Naive thymus-derived CD4-positive, alpha-beta T cell (primary cell): ENCODE measurements at regions of chr15 and their contacts with region 1.

Region 1: DNA sequence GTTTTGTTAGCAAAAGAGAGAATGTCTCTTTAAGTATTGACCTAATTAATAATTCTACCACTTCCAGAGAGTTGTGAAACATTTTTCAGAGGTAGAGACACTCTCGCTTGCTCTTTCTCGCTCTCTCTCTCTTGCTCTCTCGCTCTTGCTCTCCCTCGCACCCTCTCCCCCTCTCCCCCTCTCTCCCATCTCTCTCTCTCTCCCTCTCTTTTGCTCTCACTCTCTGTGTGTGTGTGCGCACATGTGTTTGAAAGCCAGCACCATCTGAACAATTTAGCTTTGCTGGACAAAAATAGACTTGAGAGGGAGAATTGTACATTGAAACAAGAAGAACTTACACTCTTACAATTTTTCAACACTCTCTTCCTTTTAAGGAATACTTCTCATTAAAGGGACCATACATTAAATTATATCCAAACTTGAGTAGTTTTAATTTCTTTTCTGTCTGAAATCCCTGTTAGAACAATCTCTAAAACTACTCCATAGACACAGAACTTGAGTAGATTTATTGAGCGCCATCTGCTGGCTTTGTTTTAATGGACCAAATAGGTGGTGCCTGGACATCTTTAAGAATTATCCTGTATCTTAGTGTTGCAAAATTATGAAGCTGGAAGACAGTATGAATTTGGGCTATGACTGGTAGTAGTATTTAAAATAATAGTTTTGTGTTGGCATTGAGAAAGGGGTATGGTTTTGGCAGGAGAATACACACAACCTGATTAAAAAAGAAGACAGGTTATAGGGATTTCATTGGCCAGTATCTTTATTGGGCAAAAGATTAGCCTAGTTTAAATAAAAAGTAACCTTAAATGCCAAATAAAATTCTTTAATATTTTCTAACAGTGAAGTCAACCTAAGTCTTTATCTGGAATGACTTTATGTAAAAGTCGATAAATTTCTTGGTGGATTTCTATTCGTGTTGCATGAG is 124.6 kb downstream of the AKAP13 start:
- DNase-seq: peak in 7 of 9 donors; percentile 7 to 51 (median 37)
- ATAC-seq: peak; percentile 66
- H3K4me3 ChIP-seq: no peak overlapping the region
- H3K4me3 Mint-ChIP-seq: peak overlapping the region in 1 of 10 donors; percentile 20
- H3K27ac ChIP-seq: no peak overlapping the region
- H3K27ac Mint-ChIP-seq: peak overlapping the region in 3 of 9 donors; percentile 13 to 30 (median 22)
- H3K4me1 ChIP-seq: peaks cover 11 to 13% of the 10 kb centered on the region in 2 donors
- H3K4me1 Mint-ChIP-seq: peaks cover 26 to 90% (median 71%) of the 10 kb centered on the region in 7 donors
- H3K27me3 ChIP-seq: no peaks in the 10 kb centered on the region
- H3K27me3 Mint-ChIP-seq: no peaks in the 10 kb centered on the region

Region 2: DNA sequence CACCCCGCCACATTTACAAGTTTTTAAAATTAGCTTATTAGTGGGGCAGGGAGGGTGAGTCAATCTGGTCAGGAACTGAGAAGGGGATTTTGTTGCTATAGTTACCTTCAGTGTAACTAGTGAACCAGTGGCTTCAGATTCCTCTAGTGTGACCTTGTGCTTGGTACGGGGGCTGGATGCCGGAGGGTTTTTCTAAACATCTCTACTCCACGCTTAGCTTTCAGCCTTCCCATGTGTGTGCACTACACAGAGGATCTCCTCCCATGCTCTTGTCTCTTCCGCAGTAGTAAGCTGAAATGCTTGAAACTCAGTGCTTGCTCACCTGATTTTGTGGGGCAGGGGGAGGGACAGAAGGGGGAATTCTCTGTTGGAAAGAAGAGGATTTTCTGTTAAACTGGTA is 192.5 kb before region 1 on chr15:
- CTCF ChIA-PET with region 1: no interaction called
- POLR2A ChIA-PET with region 1: no interaction called
- intact Hi-C with region 1: loop called in 1 of 2 experiments (anchors 5 kb)
- DNase-seq: no peak
- ATAC-seq: peak; percentile 71
- H3K4me3 ChIP-seq: no peak overlapping the region
- H3K4me3 Mint-ChIP-seq: no peak overlapping the region
- H3K27ac ChIP-seq: no peak overlapping the region
- H3K27ac Mint-ChIP-seq: no peak overlapping the region
- H3K4me1 ChIP-seq: peaks cover 18 to 21% of the 10 kb centered on the region in 2 donors
- H3K4me1 Mint-ChIP-seq: peaks cover 25 to 55% (median 35%) of the 10 kb centered on the region in 7 donors
- H3K27me3 ChIP-seq: no peaks in the 10 kb centered on the region
- H3K27me3 Mint-ChIP-seq: peaks cover 0 to 2% (median 0%) of the 10 kb centered on the region in 5 donors

Region 3: DNA sequence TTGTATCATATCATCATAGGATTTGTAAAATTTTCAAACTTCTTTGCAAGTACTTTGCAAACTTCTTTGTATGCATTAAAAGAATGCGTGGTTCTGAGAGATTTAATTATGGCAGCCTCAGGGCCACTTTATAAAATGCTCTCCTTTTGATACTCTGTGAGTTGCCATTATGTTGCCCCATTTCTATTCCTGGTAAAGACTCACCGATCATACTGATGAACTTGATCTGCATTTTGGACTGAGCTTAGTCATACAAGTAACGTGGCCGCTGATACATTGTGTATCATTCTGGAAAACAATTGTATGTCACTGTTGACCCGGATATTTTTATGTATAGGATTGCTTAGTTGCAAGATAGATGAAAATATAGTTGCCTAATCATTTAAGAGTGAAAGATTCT is 85.9 kb before region 1 on chr15:
- CTCF ChIA-PET with region 1: no interaction called
- POLR2A ChIA-PET with region 1: no interaction called
- intact Hi-C with region 1: loop called in 1 of 2 experiments (anchors 5 kb)
- DNase-seq: no peak
- ATAC-seq: no peak
- H3K4me3 ChIP-seq: no peak overlapping the region
- H3K4me3 Mint-ChIP-seq: peak overlapping the region in 3 of 10 donors; percentile 11 to 41 (median 14)
- H3K27ac ChIP-seq: no peak overlapping the region
- H3K27ac Mint-ChIP-seq: peak overlapping the region in 1 of 9 donors; percentile 4
- H3K4me1 ChIP-seq: peaks cover 10 to 18% of the 10 kb centered on the region in 2 donors
- H3K4me1 Mint-ChIP-seq: peaks cover 43 to 84% (median 77%) of the 10 kb centered on the region in 7 donors
- H3K27me3 ChIP-seq: no peaks in the 10 kb centered on the region
- H3K27me3 Mint-ChIP-seq: no peaks in the 10 kb centered on the region